Activated B cell treated with CpG ODN at 0.5 μM for 24 hours (primary cell): ENCODE measurements at regions of chr19 and their contacts with region 1.

Region 1: GRCh38 chr19:34145741-34146202 is 26.5 kb upstream of the LSM14A start:
- DNase-seq: no peak
- ATAC-seq: peak; percentile 65
- H3K4me3 Mint-ChIP-seq: no peak overlapping the region
- H3K27ac Mint-ChIP-seq: no peak overlapping the region
- H3K4me1 Mint-ChIP-seq: peaks cover 1% of the 10 kb centered on the region
- H3K27me3 Mint-ChIP-seq: peaks cover 3% of the 10 kb centered on the region
- CTCF ChIP-seq: peak; percentile 82

Region 2: GRCh38 chr19:33430674-33431277 is 715.0 kb before region 1 on chr19:
- CTCF ChIA-PET with region 1: no interaction called
- POLR2A ChIA-PET with region 1: no interaction called
- intact Hi-C with region 1: loop called (anchors 5 kb)
- DNase-seq: peak; percentile 38
- ATAC-seq: peak; percentile 66
- H3K4me3 Mint-ChIP-seq: no peak overlapping the region
- H3K27ac Mint-ChIP-seq: no peak overlapping the region
- H3K4me1 Mint-ChIP-seq: no peaks in the 10 kb centered on the region
- H3K27me3 Mint-ChIP-seq: peaks cover 2% of the 10 kb centered on the region
- CTCF ChIP-seq: no peak

Region 3: DNA sequence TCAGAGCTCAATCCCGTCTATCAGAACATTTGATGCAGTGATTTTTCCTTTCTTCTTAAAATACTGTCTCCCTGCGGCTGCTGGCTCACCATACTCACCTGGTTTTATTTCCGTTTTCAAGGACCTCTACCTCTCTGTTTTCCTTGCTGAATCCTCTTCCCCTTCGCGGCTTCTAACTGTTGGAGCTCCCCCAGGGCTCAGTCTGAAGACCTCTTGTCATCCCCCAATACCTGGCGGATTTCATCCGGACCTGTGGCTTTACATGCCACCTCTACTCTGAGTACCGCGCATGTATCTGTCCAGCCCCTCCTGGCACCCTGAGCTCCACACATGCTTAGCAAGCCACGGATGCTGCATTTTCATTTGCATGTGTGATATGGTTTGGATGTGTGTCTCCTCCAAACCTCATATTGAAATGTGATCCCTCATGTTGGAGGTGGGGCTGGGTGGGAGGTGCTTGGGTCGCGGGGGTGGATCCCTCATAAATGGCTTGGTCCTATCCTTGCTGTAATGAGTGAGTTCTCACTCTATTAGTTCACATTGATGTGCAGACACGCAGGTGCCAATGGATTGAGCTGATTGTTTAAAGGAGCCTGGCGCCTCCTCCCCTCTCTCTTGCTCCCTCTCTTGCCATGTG is 79.6 kb before region 1 on chr19:
- CTCF ChIA-PET with region 1: no interaction called
- POLR2A ChIA-PET with region 1: no interaction called
- intact Hi-C with region 1: no loop called
- DNase-seq: no peak
- ATAC-seq: no peak
- H3K4me3 Mint-ChIP-seq: no peak overlapping the region
- H3K27ac Mint-ChIP-seq: no peak overlapping the region
- H3K4me1 Mint-ChIP-seq: no peaks in the 10 kb centered on the region
- H3K27me3 Mint-ChIP-seq: peaks cover 14% of the 10 kb centered on the region
- CTCF ChIP-seq: no peak

Region 4: DNA sequence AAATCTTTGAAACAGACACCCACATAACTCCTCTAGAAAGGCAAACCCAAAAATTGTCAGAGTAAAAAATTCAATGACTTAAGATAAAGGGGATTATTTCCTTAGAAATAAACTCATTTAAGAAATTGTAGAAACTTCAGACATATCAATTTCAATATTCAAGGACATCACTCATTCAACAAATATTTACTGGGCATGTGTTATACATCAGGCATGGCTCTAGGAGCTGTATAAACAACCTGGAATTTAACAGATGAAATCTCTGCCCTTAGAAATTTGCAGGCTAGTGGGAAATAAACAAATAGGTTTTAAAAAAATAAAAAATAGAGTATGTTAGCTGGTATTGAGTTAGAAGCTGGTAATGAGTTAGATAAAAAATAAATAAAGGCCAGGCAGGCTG is 57.5 kb before region 1 on chr19:
- CTCF ChIA-PET with region 1: no interaction called
- POLR2A ChIA-PET with region 1: no interaction called
- intact Hi-C with region 1: no loop called
- DNase-seq: no peak
- ATAC-seq: no peak
- H3K4me3 Mint-ChIP-seq: no peak overlapping the region
- H3K27ac Mint-ChIP-seq: no peak overlapping the region
- H3K4me1 Mint-ChIP-seq: no peaks in the 10 kb centered on the region
- H3K27me3 Mint-ChIP-seq: peaks cover 22% of the 10 kb centered on the region
- CTCF ChIP-seq: no peak

Region 5: GRCh38 chr19:34120846-34121639 is 24.7 kb before region 1 on chr19:
- CTCF ChIA-PET with region 1: interaction called, 26 read pairs
- POLR2A ChIA-PET with region 1: no interaction called
- intact Hi-C with region 1: loop called (anchors 1 kb)
- DNase-seq: no peak
- ATAC-seq: peak; percentile 56
- H3K4me3 Mint-ChIP-seq: no peak overlapping the region
- H3K27ac Mint-ChIP-seq: no peak overlapping the region
- H3K4me1 Mint-ChIP-seq: no peaks in the 10 kb centered on the region
- H3K27me3 Mint-ChIP-seq: peaks cover 12% of the 10 kb centered on the region
- CTCF ChIP-seq: no peak